Activated T-helper 1 cell treated with anti-CD3 and anti-CD28 coated beads, Interleukin-12 subunit alpha, Interleukin-12 subunit beta, Interleukin-2, Interleukin-4 antibody, amounts not matched to agents 30 ng/mL and 10 ng/mL and 1 ng/mL, durations not matched to agents 14 hours and 24 hours and 36 hours (primary cell): ENCODE measurements at regions of chr19 and their contacts with region 1.

Region 1: GRCh38 chr19:16572332-16573211 is at the start of gene SLC35E1:
- DNase-seq: peak; percentile 91
- H3K4me3 Mint-ChIP-seq: peak within 1 kb of the TSS; percentile 98
- H3K27ac Mint-ChIP-seq: peak within 1 kb of the TSS; percentile 97
- H3K4me1 Mint-ChIP-seq: peaks cover 58% of the 10 kb centered on the region
- H3K27me3 Mint-ChIP-seq: no peaks in the 10 kb centered on the region
- total RNA-seq, gene SLC35E1: 60.4 and 61.7 TPM in 2 replicates

Region 2: GRCh38 chr19:16470911-16471811 is 101.4 kb before region 1 on chr19:
- intact Hi-C with region 1: loop called (anchors 5 kb)
- DNase-seq: peak; percentile 22
- H3K4me3 Mint-ChIP-seq: peak overlapping the region; percentile 90
- H3K27ac Mint-ChIP-seq: peak overlapping the region; percentile 72
- H3K4me1 Mint-ChIP-seq: peaks cover 28% of the 10 kb centered on the region
- H3K27me3 Mint-ChIP-seq: no peaks in the 10 kb centered on the region

Region 3: GRCh38 chr19:16495982-16496612 is 76.5 kb before region 1 on chr19 and contains the starts of genes C19orf44 and CALR3:
- intact Hi-C with region 1: loop called (anchors 1 kb)
- DNase-seq: peak; percentile 98
- H3K4me3 Mint-ChIP-seq: peak within 1 kb of the TSS; percentile 93
- H3K27ac Mint-ChIP-seq: peak within 1 kb of the TSS; percentile 87
- H3K4me1 Mint-ChIP-seq: peaks cover 9% of the 10 kb centered on the region
- H3K27me3 Mint-ChIP-seq: no peaks in the 10 kb centered on the region
- total RNA-seq, gene C19orf44: 4.4 and 5.6 TPM in 2 replicates
- total RNA-seq, gene CALR3: not detected in 2 replicates

Region 4: GRCh38 chr19:16509141-16510061 is 63.2 kb before region 1 on chr19:
- intact Hi-C with region 1: no loop called
- DNase-seq: no peak
- H3K4me3 Mint-ChIP-seq: no peak overlapping the region
- H3K27ac Mint-ChIP-seq: no peak overlapping the region
- H3K4me1 Mint-ChIP-seq: no peaks in the 10 kb centered on the region
- H3K27me3 Mint-ChIP-seq: no peaks in the 10 kb centered on the region

Region 5: GRCh38 chr19:16584248-16585141 is 11.9 kb after region 1 on chr19:
- intact Hi-C with region 1: loop called (anchors 1 kb)
- DNase-seq: peak; percentile 88
- H3K4me3 Mint-ChIP-seq: peak overlapping the region; percentile 87
- H3K27ac Mint-ChIP-seq: peak overlapping the region; percentile 90
- H3K4me1 Mint-ChIP-seq: peaks cover 73% of the 10 kb centered on the region
- H3K27me3 Mint-ChIP-seq: no peaks in the 10 kb centered on the region

Region 6: DNA sequence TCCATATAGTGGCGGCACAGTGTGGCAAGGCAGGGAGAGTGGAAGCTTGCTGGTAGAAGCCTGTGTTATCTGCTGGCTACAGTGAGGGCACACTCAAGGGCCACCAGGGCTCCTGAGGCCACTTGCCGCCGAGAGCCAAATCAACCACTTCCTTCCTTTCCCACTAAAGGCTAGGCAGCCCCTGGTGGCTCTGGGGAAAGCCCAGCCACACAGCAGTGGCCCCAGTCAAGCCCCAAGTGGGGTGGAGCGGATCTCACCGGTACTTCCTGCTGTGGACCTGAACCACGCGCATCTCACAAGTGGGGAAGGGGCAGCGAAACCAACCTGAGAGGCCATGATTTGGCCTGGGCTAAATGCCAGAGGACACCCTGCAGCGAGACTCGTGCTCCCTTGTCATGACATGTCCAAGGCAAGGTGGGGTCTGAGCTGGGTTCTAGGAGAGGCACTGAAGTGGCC is 21.6 kb after region 1 on chr19:
- intact Hi-C with region 1: loop called (anchors 2 kb)
- DNase-seq: peak; percentile 67
- H3K4me3 Mint-ChIP-seq: peak overlapping the region; percentile 74
- H3K27ac Mint-ChIP-seq: peak overlapping the region; percentile 85
- H3K4me1 Mint-ChIP-seq: peaks cover 75% of the 10 kb centered on the region
- H3K27me3 Mint-ChIP-seq: no peaks in the 10 kb centered on the region

Region 7: GRCh38 chr19:16659831-16660708 is 87.5 kb after region 1 on chr19 and contains the start of gene SMIM7:
- intact Hi-C with region 1: loop called (anchors 1 kb)
- DNase-seq: peak; percentile 98
- H3K4me3 Mint-ChIP-seq: peak within 1 kb of the TSS; percentile 94
- H3K27ac Mint-ChIP-seq: peak within 1 kb of the TSS; percentile 97
- H3K4me1 Mint-ChIP-seq: peaks cover 27% of the 10 kb centered on the region
- H3K27me3 Mint-ChIP-seq: peaks cover 13% of the 10 kb centered on the region
- total RNA-seq, gene SMIM7: 69.3 and 72.7 TPM in 2 replicates